ENCODE measurements at regions of chr6 and their contacts with region 1.

Region 1: GRCh38 chr6:136792410-136793262 is at the start of gene MAP3K5:
- DNase-seq: peak; percentile 89
- H3K4me3 Mint-ChIP-seq: peak within 1 kb of the TSS; percentile 92
- H3K27ac Mint-ChIP-seq: peak within 1 kb of the TSS; percentile 96
- H3K4me1 Mint-ChIP-seq: peaks cover 29% of the 10 kb centered on the region
- H3K27me3 Mint-ChIP-seq: peaks cover 11% of the 10 kb centered on the region
- total RNA-seq, gene MAP3K5: 6.1 and 6.5 TPM in 2 replicates

Region 2: DNA sequence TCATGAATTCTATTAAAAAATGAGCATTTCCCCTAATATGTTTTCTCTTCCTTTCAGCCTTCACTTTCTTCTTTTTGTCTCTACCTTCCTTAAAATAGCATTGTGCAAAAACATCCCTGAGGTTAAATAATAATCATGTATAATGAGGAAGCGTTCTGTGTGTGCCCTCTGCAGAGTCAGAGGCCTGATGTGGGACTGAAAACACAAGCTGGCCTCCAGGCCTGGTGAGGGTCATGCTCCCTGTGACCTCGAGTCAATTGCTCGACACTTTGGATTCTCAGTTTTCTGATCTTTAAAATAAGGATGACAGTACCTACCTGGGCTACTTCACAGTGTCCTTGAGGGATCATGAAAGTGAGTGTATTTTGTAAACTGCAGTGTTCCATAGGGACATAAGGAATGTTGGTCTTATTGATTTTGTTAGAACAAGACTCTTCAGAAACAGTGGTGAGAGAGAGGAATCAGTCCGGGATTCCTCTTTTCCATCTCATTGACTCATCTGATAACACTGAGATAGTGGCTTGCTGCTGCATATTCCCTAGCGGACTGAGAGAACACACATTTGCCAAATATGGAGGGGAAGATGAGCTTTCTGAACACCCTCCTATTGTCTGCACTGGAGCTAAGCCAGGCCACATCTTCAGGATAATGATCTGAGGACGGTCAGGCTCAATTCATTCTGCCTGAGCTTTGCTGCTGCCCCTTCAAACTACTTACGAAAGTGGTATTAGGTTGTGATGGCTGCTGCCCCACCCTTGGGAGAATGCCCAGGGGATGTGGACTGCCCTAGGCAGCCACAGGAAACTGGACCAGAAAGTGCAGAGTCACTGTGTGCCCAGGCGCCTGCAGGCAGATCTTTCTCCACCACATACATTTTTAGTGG is 980.8 kb before region 1 on chr6:
- intact Hi-C with region 1: no loop called
- DNase-seq: no peak
- H3K4me3 Mint-ChIP-seq: no peak overlapping the region
- H3K27ac Mint-ChIP-seq: no peak overlapping the region
- H3K4me1 Mint-ChIP-seq: peaks cover 2% of the 10 kb centered on the region
- H3K27me3 Mint-ChIP-seq: no peaks in the 10 kb centered on the region

Region 3: GRCh38 chr6:136593748-136594490 is 198.7 kb before region 1 on chr6:
- intact Hi-C with region 1: loop called (anchors 1 kb)
- DNase-seq: peak; percentile 41
- H3K4me3 Mint-ChIP-seq: peak overlapping the region; percentile 54
- H3K27ac Mint-ChIP-seq: peak overlapping the region; percentile 95
- H3K4me1 Mint-ChIP-seq: peaks cover 23% of the 10 kb centered on the region
- H3K27me3 Mint-ChIP-seq: no peaks in the 10 kb centered on the region

Region 4: DNA sequence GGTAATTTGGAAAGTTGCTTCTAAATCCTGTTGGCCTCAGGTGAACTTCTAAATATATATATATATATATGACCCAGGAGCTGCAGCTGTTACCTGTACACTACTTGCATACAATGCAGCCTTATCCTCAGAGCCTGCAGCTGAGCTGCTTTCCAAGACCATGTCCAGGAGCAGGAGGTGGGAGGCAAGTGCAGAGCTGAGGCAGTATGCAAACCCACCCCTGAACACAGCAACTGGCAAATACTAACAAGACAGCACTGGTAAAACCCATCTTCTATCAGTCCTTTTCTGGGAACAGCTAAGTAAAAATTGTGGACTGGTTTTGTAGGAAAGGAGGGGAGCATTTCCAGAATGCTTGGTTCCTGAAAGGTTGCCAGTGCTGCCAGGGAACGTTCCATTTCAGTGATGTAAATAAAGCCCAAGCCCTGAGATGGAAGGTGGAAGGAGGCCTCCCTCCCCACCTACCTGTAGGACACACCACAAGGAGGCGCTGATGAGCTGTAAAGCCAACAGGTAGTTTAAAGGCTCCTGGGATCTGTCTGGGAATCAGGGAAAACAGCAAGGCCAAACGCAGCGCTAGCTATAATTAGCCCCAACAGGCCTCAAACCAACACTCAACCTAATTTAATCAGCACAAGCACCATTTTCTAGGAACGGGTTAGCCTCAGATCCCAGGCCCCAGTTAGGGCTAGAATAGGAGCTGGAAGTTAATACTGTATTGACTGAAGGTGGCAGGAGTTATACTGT is 148.6 kb before region 1 on chr6:
- intact Hi-C with region 1: loop called (anchors 1 kb)
- DNase-seq: peak; percentile 65
- H3K4me3 Mint-ChIP-seq: no peak overlapping the region
- H3K27ac Mint-ChIP-seq: no peak overlapping the region
- H3K4me1 Mint-ChIP-seq: peaks cover 1% of the 10 kb centered on the region
- H3K27me3 Mint-ChIP-seq: no peaks in the 10 kb centered on the region

Region 5: DNA sequence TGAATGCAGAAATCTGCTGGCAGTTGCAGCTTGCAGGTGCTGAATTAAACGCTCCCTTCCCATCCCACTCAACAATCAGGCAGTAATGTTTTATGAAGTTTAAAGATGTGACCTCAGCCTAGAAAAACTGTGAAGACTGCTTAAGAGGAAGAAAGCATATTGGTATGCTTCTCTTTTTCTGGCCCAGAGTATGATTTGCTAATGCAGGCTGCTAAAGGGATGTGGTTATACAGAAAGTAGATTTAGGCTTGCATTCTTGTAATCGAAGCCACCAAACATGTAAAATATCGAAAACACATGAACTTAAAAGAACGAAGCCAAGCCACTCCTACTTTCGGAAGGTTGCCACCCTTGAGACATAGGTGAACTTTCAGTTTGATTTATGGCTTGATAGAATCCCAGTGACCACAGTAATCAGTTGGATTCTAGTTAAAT is 41.1 kb before region 1 on chr6:
- intact Hi-C with region 1: loop called (anchors 1 kb)
- DNase-seq: peak; percentile 37
- H3K4me3 Mint-ChIP-seq: peak overlapping the region; percentile 66
- H3K27ac Mint-ChIP-seq: peak overlapping the region; percentile 70
- H3K4me1 Mint-ChIP-seq: peaks cover 71% of the 10 kb centered on the region
- H3K27me3 Mint-ChIP-seq: peaks cover 10% of the 10 kb centered on the region

Region 6: DNA sequence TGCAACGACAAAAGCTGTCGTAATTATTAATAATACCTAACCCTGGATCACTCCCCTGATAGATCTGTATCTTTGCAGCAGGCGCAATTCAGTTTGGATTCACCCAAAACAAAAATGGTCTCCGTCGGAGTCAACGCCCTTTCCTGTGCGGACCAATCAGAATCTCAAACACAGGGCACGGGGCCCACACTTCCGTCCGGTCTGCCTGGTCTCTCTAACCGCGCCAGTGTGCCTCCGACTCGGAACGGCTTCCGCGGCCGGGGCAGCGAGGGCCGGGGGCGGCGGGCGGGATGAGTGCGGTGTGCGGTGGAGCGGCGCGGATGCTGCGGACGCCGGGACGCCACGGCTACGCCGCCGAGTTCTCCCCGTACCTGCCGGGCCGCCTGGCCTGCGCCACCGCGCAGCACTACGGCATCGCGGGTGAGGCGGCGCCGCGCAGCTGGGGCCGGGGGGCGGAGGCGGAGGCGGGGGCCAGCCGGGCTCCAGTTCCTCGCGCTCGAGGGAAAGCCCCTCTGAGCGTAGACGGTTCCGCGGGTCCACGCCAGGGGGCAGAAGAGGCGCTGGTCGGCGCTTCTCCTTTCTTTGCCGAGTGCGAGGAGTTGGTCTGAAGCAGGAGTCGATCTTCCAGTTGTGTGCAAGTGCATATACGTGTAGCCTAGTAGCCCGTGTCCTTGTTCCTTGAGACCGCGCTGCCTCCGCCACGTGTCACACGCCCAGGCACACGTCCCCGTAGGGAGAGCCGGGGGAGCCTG is 29.9 kb after region 1 on chr6 and contains the start of gene PEX7:
- intact Hi-C with region 1: loop called (anchors 2 kb)
- DNase-seq: peak; percentile 87
- H3K4me3 Mint-ChIP-seq: peak within 1 kb of the TSS; percentile 89
- H3K27ac Mint-ChIP-seq: peak within 1 kb of the TSS; percentile 85
- H3K4me1 Mint-ChIP-seq: peaks cover 11% of the 10 kb centered on the region
- H3K27me3 Mint-ChIP-seq: peaks cover 11% of the 10 kb centered on the region
- total RNA-seq, gene PEX7: 4.1 and 4.2 TPM in 2 replicates